CD4-positive, alpha-beta T cell (primary cell): ENCODE measurements at regions of chr10 and their contacts with region 1.

Region 1: GRCh38 chr10:68156373-68157185 is 47.3 kb downstream of the MYPN start:
- DNase-seq: peak; percentile 16 to 80 (median 46)
- ATAC-seq: peak; percentile 62
- H3K4me3 ChIP-seq: no peak overlapping the region
- H3K4me3 Mint-ChIP-seq: no peak overlapping the region
- H3K27ac ChIP-seq: no peak overlapping the region
- H3K27ac Mint-ChIP-seq: no peak overlapping the region
- H3K4me1 ChIP-seq: no peaks in the 10 kb centered on the region
- H3K4me1 Mint-ChIP-seq: no peaks in the 10 kb centered on the region
- H3K27me3 ChIP-seq: no peaks in the 10 kb centered on the region
- H3K27me3 Mint-ChIP-seq: peaks cover 13% of the 10 kb centered on the region
- CTCF ChIP-seq: peak; percentile 88

Region 2: GRCh38 chr10:67697724-67698131 is 458.9 kb before region 1 on chr10:
- CTCF ChIA-PET with region 1: no interaction called
- POLR2A ChIA-PET with region 1: no interaction called
- intact Hi-C with region 1: loop called in 1 of 2 experiments (anchors 10 kb)
- DNase-seq: peak in 9 of 14 experiments; percentile 2 to 75 (median 10)
- ATAC-seq: peak; percentile 90
- H3K4me3 ChIP-seq: no peak overlapping the region
- H3K4me3 Mint-ChIP-seq: no peak overlapping the region
- H3K27ac ChIP-seq: no peak overlapping the region
- H3K27ac Mint-ChIP-seq: no peak overlapping the region
- H3K4me1 ChIP-seq: peaks cover 6% of the 10 kb centered on the region
- H3K4me1 Mint-ChIP-seq: peaks cover 15% of the 10 kb centered on the region
- H3K27me3 ChIP-seq: no peaks in the 10 kb centered on the region
- H3K27me3 Mint-ChIP-seq: peaks cover 39% of the 10 kb centered on the region
- CTCF ChIP-seq: peak; percentile 73

Region 3: DNA sequence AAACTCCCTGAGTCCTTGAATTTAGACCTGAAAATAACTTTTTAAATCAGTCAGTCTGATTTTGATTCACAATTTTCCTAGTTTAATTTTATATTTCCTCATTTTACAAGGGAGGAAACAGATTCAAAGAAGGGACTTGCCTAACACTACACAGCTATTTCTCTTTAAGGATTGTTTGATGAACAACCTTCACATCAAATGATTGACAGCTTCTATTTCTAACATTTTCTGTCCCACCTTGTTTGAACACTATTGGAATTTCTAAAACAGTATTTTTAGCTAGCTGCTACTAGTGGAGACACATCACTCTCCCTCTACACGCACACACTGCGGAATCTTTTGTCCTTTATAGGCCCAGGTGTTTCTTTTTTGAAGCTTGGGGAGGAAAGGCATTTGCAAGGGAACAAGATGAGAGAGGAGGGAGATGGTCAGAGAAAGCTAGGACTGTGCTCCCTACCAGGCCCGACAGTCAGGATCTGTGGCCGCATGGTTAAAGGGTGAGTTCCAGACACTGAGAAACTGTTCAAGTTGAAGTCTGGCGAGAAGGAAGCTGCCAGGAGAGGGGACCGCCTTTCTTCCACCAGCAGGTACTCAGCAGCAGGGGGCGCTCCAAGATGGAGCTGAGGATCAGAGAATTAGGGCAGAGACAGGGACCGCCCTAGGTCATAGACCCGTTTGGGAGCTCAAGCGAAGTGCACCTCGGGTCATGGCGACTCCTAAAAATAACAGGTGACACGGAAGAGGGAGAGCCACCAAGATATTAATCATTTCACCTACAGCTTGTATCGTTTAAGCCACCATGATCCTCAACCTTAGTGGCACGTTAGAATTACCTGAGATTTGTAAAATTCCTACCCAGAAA is 368.3 kb before region 1 on chr10:
- CTCF ChIA-PET with region 1: interaction called, 12 read pairs
- POLR2A ChIA-PET with region 1: no interaction called
- intact Hi-C with region 1: loop called (anchors 1 to 2 kb)
- DNase-seq: peak; percentile 52 to 79 (median 62)
- ATAC-seq: peak; percentile 73
- H3K4me3 ChIP-seq: no peak overlapping the region
- H3K4me3 Mint-ChIP-seq: no peak overlapping the region
- H3K27ac ChIP-seq: no peak overlapping the region
- H3K27ac Mint-ChIP-seq: no peak overlapping the region
- H3K4me1 ChIP-seq: peaks cover 30% of the 10 kb centered on the region
- H3K4me1 Mint-ChIP-seq: peaks cover 30% of the 10 kb centered on the region
- H3K27me3 ChIP-seq: no peaks in the 10 kb centered on the region
- H3K27me3 Mint-ChIP-seq: no peaks in the 10 kb centered on the region
- CTCF ChIP-seq: peak; percentile 57

Region 4: DNA sequence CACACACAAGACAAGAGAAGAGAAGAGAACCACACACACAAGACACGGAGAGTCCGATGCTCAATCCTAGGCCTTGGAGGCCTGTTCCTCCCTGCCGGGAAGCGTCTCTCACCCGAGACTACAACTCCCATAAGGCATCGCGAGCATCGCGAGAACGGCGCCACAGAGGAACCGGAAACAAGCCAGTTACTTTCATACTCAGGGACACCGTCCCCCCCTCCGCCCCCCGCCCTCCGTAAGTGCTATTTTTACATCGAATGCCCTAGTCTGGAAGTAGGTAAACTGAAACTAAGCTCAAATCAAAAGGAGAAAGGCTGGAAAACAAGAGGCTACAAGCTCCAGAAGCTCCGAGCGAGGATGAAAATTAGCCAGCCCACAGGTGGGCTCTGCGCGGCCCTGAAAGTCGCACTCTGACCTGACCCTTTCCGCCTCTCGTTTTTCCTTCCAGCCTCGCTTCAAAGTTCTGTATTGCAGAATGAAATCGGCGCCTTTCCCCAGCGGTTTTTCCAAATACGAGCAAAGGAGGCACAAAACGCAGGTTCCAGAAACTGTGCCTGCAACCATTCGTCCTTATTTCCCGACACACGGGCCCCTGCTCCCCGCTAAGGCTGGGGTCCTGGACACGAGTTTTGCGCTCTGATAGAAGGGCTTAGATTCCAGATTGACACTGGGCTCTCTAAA is 307.1 kb before region 1 on chr10:
- CTCF ChIA-PET with region 1: interaction called, 34 read pairs
- POLR2A ChIA-PET with region 1: interaction called, 4 read pairs
- intact Hi-C with region 1: no loop called
- DNase-seq: peak; percentile 87 to 96 (median 93)
- ATAC-seq: peak; percentile 99
- H3K4me3 ChIP-seq: peak overlapping the region; percentile 91
- H3K4me3 Mint-ChIP-seq: peak overlapping the region; percentile 94
- H3K27ac ChIP-seq: peak overlapping the region; percentile 78 to 93
- H3K27ac Mint-ChIP-seq: peak overlapping the region; percentile 91
- H3K4me1 ChIP-seq: peaks cover 12% of the 10 kb centered on the region
- H3K4me1 Mint-ChIP-seq: peaks cover 9% of the 10 kb centered on the region
- H3K27me3 ChIP-seq: no peaks in the 10 kb centered on the region
- H3K27me3 Mint-ChIP-seq: no peaks in the 10 kb centered on the region
- CTCF ChIP-seq: no peak

Region 5: GRCh38 chr10:68720793-68721672 is 564.5 kb after region 1 on chr10 and contains the start of gene CCAR1:
- CTCF ChIA-PET with region 1: no interaction called
- POLR2A ChIA-PET with region 1: no interaction called
- intact Hi-C with region 1: no loop called
- DNase-seq: peak; percentile 92 to 99 (median 96)
- ATAC-seq: peak; percentile 94
- H3K4me3 ChIP-seq: peak within 1 kb of the TSS; percentile 93
- H3K4me3 Mint-ChIP-seq: peak within 1 kb of the TSS; percentile 100
- H3K27ac ChIP-seq: peak within 1 kb of the TSS; percentile 85 to 89
- H3K27ac Mint-ChIP-seq: peak within 1 kb of the TSS; percentile 98
- H3K4me1 ChIP-seq: peaks cover 16% of the 10 kb centered on the region
- H3K4me1 Mint-ChIP-seq: peaks cover 16% of the 10 kb centered on the region
- H3K27me3 ChIP-seq: no peaks in the 10 kb centered on the region
- H3K27me3 Mint-ChIP-seq: no peaks in the 10 kb centered on the region
- CTCF ChIP-seq: no peak
- total RNA-seq, gene CCAR1: 68.9 to 82.2 TPM